ENCODE measurements at regions of chr9 and their contacts with region 1.

Region 1: GRCh38 chr9:10230512-10230911 is 382.3 kb downstream of the PTPRD start:
- DNase-seq: no peak
- H3K4me3 ChIP-seq: no peak overlapping the region
- H3K27ac ChIP-seq: no peak overlapping the region
- H3K4me1 ChIP-seq: no peaks in the 10 kb centered on the region
- H3K27me3 ChIP-seq: no peaks in the 10 kb centered on the region
- CTCF ChIP-seq: no peak

Region 2: GRCh38 chr9:9874270-9874669 is 356.2 kb before region 1 on chr9:
- CTCF ChIA-PET with region 1: no interaction called
- POLR2A ChIA-PET with region 1: no interaction called
- intact Hi-C with region 1: no loop called
- DNase-seq: no peak
- H3K4me3 ChIP-seq: no peak overlapping the region
- H3K27ac ChIP-seq: no peak overlapping the region
- H3K4me1 ChIP-seq: no peaks in the 10 kb centered on the region
- H3K27me3 ChIP-seq: no peaks in the 10 kb centered on the region
- CTCF ChIP-seq: no peak

Region 3: DNA sequence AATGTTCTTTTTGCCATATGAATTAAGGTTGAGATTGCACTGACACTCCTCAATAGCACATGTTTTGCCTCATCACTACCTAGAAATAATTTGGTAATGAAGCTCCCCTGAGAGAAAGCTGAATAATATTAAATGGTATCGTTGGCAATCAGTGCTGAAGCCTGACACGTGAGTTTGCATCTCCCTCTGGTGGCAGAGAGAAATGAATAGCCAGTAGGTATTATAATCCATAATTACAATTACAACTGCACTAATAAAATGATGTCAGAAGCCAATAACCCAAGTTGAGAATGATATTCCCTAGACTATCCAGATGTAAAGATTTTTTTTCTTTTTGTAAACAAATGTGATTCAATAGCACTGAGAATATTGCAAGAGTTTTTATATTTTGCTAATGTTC is 318.1 kb before region 1 on chr9:
- CTCF ChIA-PET with region 1: no interaction called
- POLR2A ChIA-PET with region 1: no interaction called
- intact Hi-C with region 1: no loop called
- DNase-seq: no peak
- H3K4me3 ChIP-seq: no peak overlapping the region
- H3K27ac ChIP-seq: no peak overlapping the region
- H3K4me1 ChIP-seq: no peaks in the 10 kb centered on the region
- H3K27me3 ChIP-seq: no peaks in the 10 kb centered on the region
- CTCF ChIP-seq: peak; percentile 26; the same call in 1 of the 2 replicates

Region 4: DNA sequence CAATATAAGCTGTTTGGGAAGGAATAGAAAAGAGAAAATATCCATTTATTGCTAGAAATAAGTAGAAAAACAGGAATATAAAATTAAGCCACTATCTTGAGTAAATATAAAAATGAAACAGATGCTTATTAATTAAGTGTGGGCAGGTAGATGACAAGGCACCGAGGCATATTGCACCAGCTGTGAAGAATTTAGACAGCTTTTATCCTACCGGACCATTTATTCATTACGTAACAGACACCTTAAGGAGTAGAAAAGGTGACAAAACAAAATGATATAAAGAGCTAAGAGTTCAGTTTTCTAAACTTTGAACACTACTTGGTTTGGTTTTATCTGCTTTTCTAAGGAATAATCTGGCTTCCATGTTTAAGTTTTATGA is 21.8 kb before region 1 on chr9:
- CTCF ChIA-PET with region 1: no interaction called
- POLR2A ChIA-PET with region 1: interaction called, 13 read pairs
- intact Hi-C with region 1: no loop called
- DNase-seq: no peak
- H3K4me3 ChIP-seq: no peak overlapping the region
- H3K27ac ChIP-seq: no peak overlapping the region
- H3K4me1 ChIP-seq: no peaks in the 10 kb centered on the region
- H3K27me3 ChIP-seq: no peaks in the 10 kb centered on the region
- CTCF ChIP-seq: no peak

Measured in PC-9 (cell line).